Right ventricle myocardium inferior (tissue), 1 donor: ENCODE measurements at regions of chr4 and their contacts with region 1.

Region 1: DNA sequence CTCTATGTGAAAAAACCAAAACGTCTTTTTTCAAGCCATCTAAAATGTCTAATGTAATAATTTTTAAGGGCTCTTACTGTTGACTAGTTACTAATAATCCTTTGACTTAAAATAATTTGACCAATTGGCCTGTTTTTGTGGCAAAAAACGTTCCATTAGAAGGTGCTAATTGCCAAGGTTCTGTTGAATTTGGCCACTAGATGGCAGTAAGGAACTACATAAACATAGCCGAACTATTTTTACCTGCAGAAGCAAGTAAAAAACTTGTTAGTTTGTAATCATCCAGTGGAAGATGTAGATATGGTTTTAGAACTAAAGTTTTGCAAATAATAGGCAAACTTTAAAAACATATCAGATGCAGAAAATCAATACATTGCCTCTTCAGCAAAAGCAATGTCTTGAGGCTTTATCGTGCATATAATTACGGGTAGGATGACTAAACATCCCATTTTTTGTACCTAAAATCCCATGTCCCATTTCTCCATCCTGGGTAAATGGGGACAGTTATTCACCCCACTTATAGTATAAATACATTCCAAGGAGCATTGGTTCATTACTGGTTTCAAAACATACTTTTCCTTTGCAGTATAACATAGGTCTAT is 57.6 kb downstream of the PROM1 start:
- DNase-seq: no peak
- ATAC-seq: no peak

Region 2: DNA sequence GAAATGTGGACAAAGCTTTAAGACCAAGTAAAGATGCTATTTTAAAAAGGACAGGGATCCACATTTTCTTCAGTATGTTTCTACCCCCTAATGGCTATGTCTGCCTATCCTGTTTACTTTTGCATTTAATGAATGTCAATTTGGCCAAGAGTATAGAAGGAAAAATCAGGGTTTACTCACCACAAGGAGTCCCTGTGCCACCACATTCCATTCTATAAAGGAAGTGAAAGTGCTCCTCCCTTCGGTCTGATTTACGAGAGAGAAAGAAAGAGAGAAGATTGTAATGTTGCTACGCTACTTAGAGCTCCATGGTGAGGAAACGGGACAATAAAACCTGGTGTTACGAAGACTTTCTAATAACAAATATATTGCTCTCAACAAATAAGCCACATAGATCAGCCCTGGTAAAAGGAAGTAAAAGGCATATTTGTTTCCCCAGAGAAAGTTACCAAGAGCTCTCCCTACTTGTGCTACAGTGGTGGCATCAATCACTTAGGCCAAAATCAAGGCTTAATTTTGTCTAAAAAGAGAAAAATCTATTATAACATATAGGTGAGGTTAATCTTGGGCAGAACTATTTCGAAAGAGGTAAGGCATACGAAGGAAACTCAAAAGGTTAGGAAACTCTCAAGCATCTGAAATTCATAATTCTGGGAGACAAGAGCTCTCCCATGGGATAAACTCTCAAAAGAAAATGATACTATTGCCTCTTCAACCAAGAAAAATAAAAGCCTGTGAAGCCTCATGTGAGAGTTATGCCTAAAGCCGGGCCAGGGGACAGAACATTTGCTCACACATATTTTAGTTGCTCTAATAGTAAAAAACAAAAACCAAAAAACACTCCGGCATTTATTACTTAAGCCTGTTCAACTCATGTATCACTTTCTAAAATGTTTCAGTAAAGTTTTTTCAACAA is 170.5 kb after region 1 on chr4:
- intact Hi-C with region 1: loop called (anchors 2 kb)
- DNase-seq: no peak
- ATAC-seq: peak; percentile 91